SK-N-SH (cell line): ENCODE measurements at regions of chr1 and their contacts with region 1.

Region 1: DNA sequence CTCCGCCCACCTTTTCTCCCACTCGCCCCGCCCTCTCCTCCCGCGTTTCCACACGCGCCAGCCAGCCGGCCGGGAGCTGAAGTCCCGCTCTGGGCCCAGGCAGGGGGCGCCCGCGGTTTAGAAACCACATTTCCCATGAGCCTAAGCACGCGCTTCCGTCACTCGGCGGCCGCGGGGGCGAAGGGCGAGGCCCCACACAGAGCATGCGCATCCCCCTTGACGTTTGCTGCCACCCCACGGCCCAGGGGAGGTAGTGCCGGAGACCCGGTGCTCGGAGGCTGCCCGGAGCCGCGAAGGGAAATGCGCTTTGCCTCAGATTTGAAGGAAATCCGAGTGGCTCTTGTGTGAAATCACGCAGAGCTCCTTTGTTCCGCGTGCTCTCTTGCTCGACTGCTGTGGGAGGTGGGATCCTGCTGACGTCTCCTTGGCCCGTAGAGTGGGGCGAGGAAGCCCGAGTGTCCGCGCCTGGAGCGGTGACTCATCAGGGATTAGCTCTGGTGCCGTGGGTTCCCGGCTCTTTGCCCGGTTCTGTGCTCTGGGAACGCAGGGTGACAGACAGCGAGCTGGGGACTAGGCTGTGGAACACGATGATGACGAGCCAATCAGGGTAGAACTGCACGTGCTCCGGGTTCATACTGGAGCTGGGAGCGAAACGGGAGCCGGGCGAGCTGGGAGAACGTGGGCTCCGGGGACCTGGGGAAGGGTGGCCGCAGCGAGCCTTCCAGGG is 407 bp upstream of the B3GALNT2 start:
- DNase-seq: peak; percentile 97
- H3K4me3 ChIP-seq: peak overlapping the region; percentile 60 to 76
- H3K27ac ChIP-seq: peak overlapping the region; percentile 97 to 98
- H3K4me1 ChIP-seq: peaks cover 5 to 13% of the 10 kb centered on the region in 2 experiments; a peak in 3 of 4 replicates
- H3K27me3 ChIP-seq: no peaks in the 10 kb centered on the region
- CTCF ChIP-seq: peak; percentile 75
- EP300 ChIP-seq: 0 out of 4 replicates have a peak, but pooled peaks have one; percentile 17
- RAD21 ChIP-seq: peak; percentile 42

Region 2: GRCh38 chr1:235455823-235456222 is 48.8 kb before region 1 on chr1:
- CTCF ChIA-PET with region 1: no interaction called
- POLR2A ChIA-PET with region 1: no interaction called
- DNase-seq: no peak
- H3K4me3 ChIP-seq: no peak overlapping the region
- H3K27ac ChIP-seq: no peak overlapping the region
- H3K4me1 ChIP-seq: no peaks in the 10 kb centered on the region
- H3K27me3 ChIP-seq: no peaks in the 10 kb centered on the region
- CTCF ChIP-seq: no peak
- EP300 ChIP-seq: no peak
- RAD21 ChIP-seq: no peak

Region 3: GRCh38 chr1:235571482-235571881 is 66.8 kb after region 1 on chr1:
- CTCF ChIA-PET with region 1: no interaction called
- POLR2A ChIA-PET with region 1: no interaction called
- DNase-seq: no peak
- H3K4me3 ChIP-seq: no peak overlapping the region
- H3K27ac ChIP-seq: no peak overlapping the region
- H3K4me1 ChIP-seq: no peaks in the 10 kb centered on the region
- H3K27me3 ChIP-seq: no peaks in the 10 kb centered on the region
- CTCF ChIP-seq: no peak
- EP300 ChIP-seq: no peak
- RAD21 ChIP-seq: no peak

Region 4: DNA sequence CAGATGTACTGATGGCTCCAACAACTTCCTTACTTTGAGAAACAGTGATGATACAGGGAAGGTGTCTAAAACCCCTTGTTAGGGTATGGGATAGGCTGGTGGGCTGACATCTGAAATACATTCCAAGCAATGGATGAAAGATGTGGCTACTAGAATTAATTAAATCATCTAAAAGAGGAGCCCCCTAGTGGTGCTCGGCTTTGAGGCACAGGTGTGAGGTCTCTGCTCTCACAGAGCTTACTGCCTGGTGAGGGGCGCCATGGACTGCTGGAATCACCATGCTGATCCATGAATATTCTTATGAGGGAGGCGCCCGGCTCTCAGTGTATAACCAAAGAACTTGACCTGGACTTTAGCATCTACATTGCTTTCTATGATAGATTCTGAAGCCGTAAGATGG is 96.4 kb after region 1 on chr1:
- CTCF ChIA-PET with region 1: interaction called, 10 read pairs
- POLR2A ChIA-PET with region 1: no interaction called
- DNase-seq: no peak
- H3K4me3 ChIP-seq: no peak overlapping the region
- H3K27ac ChIP-seq: no peak overlapping the region
- H3K4me1 ChIP-seq: no peaks in the 10 kb centered on the region
- H3K27me3 ChIP-seq: no peaks in the 10 kb centered on the region
- CTCF ChIP-seq: peak; percentile 52
- EP300 ChIP-seq: no peak
- RAD21 ChIP-seq: no peak